ENCODE measurements at regions of chr1 and their contacts with region 1.

Region 1: DNA sequence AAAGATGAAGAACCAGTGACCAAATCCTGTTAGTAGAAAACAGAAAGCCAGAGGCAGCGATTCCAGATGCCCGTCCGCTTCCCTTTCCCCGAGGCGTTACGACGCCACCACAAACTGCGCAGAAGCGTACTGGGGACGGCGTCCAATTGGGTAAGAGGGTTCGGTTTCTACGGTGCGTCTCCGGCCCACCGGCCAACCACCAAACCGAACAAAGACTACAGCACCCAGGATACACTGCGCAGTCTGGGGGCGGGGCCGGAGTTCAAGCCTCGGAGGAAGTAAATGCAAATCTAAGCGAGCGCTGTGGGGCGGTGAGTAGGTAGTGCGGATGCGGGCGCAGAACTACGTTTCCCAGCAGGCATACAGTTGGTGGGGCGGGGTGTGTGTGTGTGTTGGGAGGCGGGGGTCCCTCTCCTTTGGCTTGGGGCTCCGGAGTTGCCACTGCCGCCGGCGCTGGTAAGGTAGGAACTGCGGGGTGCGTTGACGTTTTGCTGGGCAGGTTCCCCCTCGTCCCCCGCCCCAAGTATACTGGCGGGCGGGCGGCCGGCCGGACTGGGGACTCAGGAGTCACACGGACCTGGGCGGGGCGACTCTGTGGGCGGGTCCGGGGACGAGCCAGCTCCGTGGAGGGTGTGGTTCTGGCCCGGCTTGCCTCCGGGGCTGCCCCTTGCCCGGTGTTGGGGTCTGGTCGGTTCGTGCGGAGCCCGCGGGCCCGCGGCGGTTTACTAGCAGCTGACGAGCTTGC is at the starts of genes SWT1 and TRMT1L:
- DNase-seq: peak; percentile 98
- H3K4me3 Mint-ChIP-seq: peak within 1 kb of the TSS; percentile 92
- H3K27ac Mint-ChIP-seq: peak within 1 kb of the TSS; percentile 91
- H3K4me1 Mint-ChIP-seq: peaks cover 44% of the 10 kb centered on the region
- H3K27me3 Mint-ChIP-seq: no peaks in the 10 kb centered on the region
- total RNA-seq, gene SWT1: 1.7 to 2.9 TPM
- total RNA-seq, gene TRMT1L: 26.6 to 28.7 TPM

Region 2: DNA sequence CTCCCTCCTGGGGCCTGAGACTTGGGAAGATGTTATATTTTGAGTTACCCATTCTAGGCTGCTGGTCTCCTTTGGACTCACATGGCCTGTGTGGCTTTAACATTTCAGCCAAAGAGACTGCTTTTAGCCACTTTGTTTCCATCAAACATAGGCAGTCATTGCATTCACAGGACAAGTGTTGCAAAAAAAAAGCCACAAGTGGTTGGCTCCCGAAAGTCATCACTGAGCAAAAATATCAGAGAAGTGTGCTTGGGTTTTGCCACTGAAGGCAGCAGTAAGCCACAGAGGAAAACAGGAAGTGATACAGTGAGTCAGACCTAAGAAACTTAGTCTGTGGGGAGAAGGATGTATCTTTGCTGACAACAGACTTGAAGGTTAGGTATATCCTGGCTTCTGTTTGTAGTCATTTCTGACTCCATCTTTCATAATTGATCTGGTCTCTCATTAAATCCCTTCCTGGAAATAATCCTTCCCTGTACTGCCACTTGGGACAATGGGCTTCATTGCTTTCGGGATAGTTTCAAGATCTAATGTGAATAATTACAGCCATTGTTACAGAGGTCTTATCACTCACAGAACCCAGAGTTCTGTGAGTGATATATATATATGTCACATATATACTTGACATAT is 1200.4 kb before region 1 on chr1:
- CTCF ChIA-PET with region 1: no interaction called
- intact Hi-C with region 1: loop called (anchors 2 kb)
- DNase-seq: peak; percentile 71
- H3K4me3 Mint-ChIP-seq: no peak overlapping the region
- H3K27ac Mint-ChIP-seq: peak overlapping the region; percentile 86
- H3K4me1 Mint-ChIP-seq: no peaks in the 10 kb centered on the region
- H3K27me3 Mint-ChIP-seq: no peaks in the 10 kb centered on the region

Region 3: GRCh38 chr1:184754476-184755225 is 402.4 kb before region 1 on chr1 and contains the start of gene EDEM3:
- CTCF ChIA-PET with region 1: no interaction called
- intact Hi-C with region 1: loop called (anchors 1 kb)
- DNase-seq: peak; percentile 98
- H3K4me3 Mint-ChIP-seq: peak within 1 kb of the TSS; percentile 88
- H3K27ac Mint-ChIP-seq: peak within 1 kb of the TSS; percentile 88
- H3K4me1 Mint-ChIP-seq: peaks cover 36% of the 10 kb centered on the region
- H3K27me3 Mint-ChIP-seq: no peaks in the 10 kb centered on the region
- total RNA-seq, gene EDEM3: 9.9 to 10.5 TPM

Region 4: DNA sequence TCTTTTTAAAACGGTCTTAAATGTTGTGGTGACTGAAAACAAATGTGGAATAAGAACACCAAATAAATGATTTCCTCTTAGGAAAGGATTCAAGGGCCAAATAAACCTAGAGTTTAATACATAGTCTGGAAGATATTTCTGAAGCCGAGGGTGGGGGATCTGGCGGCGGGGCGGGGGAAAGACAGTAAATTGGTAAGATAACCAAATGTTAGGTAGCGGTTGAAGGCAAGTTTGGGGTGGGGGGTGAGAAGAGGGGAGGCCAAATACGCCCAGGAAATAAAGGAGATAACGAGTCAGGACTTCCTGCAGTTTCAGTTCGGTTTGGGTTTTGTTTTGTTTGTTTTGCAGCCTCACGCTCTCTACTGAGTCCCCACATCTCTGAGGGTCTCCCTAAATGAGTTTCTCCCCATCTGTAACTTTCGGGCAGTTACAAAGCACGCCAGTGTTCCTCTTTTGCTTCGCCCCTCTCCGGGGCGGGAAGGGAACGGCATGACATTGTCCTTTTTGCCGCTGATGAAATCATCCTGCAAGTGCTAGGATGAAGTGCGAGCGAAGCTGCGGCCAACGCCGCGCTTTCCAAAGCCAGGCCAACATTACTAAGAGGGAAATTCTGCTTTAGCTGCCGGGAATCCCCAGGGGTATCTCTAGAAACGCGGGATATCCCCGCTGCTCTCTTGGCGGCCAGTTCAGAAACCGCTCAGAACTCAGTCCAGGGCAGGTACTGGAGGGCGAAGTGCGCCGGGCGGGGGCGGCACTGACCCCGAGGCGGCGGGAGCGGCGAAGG is 183.6 kb before region 1 on chr1:
- CTCF ChIA-PET with region 1: interaction called, 3 read pairs
- intact Hi-C with region 1: loop called (anchors 1 kb)
- DNase-seq: peak; percentile 84
- H3K4me3 Mint-ChIP-seq: peak overlapping the region; percentile 79
- H3K27ac Mint-ChIP-seq: peak overlapping the region; percentile 93
- H3K4me1 Mint-ChIP-seq: peaks cover 40% of the 10 kb centered on the region
- H3K27me3 Mint-ChIP-seq: peaks cover 25% of the 10 kb centered on the region

Region 5: GRCh38 chr1:185170291-185170848 is 13.3 kb after region 1 on chr1:
- CTCF ChIA-PET with region 1: interaction called, 16 read pairs
- intact Hi-C with region 1: loop called (anchors 1 kb)
- DNase-seq: peak; percentile 60
- H3K4me3 Mint-ChIP-seq: no peak overlapping the region
- H3K27ac Mint-ChIP-seq: peak overlapping the region; percentile 46
- H3K4me1 Mint-ChIP-seq: peaks cover 3% of the 10 kb centered on the region
- H3K27me3 Mint-ChIP-seq: no peaks in the 10 kb centered on the region

Region 6: GRCh38 chr1:185281245-185281644 is 124.2 kb after region 1 on chr1:
- CTCF ChIA-PET with region 1: no interaction called
- intact Hi-C with region 1: no loop called
- DNase-seq: peak; percentile 24
- H3K4me3 Mint-ChIP-seq: peak overlapping the region; percentile 8
- H3K27ac Mint-ChIP-seq: peak overlapping the region; percentile 77
- H3K4me1 Mint-ChIP-seq: peaks cover 59% of the 10 kb centered on the region
- H3K27me3 Mint-ChIP-seq: no peaks in the 10 kb centered on the region

Region 7: DNA sequence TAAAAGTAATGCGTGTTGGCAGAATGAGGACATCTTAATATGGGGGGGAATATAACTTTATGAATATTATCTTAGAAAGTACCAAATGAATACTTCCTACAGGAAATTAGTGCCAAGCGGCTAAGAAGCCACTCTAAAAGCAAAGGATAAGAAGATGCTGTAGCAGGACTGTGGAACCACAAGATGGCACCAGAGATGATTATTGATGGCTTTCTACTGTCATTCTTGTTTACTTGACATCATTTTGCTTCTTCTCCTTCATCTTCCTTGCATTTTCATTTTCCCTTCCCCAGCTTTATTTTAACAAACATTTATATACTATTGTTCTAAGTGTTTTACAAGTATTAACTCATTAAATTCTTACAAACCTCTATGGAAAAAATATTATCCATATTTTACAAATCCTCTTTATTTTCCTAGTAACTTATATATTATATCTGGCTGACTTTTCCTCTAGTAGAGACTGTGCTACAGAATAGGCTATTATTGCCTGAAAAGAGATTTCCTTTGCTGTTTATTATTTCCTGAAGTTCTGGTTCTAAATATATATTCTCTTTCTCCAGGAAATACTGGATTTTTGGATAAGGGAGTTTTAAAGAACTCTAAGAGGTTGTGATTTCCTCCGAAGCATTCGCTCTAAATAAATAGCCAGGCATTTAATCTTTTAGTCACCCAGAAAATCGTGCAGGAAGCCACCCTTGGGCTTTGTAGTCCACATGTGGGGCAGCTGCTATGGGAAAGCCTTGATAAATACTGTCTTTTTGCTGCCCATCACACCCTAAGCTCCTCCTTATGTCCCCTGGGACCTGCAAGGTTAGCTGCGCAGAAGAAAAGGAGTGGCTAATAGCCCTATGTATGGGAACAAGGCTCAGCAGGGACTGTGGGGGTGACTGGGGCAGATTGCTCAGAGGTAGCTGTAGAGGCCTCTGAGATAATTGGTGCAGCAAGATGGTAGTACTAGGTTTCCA is 1148.2 kb after region 1 on chr1:
- CTCF ChIA-PET with region 1: no interaction called
- intact Hi-C with region 1: loop called (anchors 5 kb)
- DNase-seq: peak; percentile 45
- H3K4me3 Mint-ChIP-seq: no peak overlapping the region
- H3K27ac Mint-ChIP-seq: peak overlapping the region; percentile 95
- H3K4me1 Mint-ChIP-seq: peaks cover 63% of the 10 kb centered on the region
- H3K27me3 Mint-ChIP-seq: no peaks in the 10 kb centered on the region